ENCODE measurements at regions of chr7 and their contacts with region 1.

Region 1: GRCh38 chr7:95411036-95411435 is 14.9 kb upstream of the PON3 start:
- DNase-seq: no peak
- ATAC-seq: no peak
- H3K4me3 ChIP-seq: no peak overlapping the region
- H3K27ac ChIP-seq: no peak overlapping the region
- H3K4me1 ChIP-seq: no peaks in the 10 kb centered on the region
- H3K27me3 ChIP-seq: no peaks in the 10 kb centered on the region
- CTCF ChIP-seq: no peak
- EP300 ChIP-seq: no peak
- POLR2A ChIP-seq: no peak
- RAD21 ChIP-seq: no peak

Region 2: GRCh38 chr7:95324431-95324830 is 86.6 kb before region 1 on chr7 and contains the start of gene PON1:
- CTCF ChIA-PET with region 1: no interaction called
- POLR2A ChIA-PET with region 1: no interaction called
- RAD21 ChIA-PET with region 1: no interaction called
- SMC1A ChIA-PET with region 1: no interaction called
- in situ Hi-C with region 1: no loop called
- intact Hi-C with region 1: no loop called
- DNase-seq: no peak
- ATAC-seq: peak; percentile 65
- H3K4me3 ChIP-seq: peak within 1 kb of the TSS; percentile 32; the same call in 1 of the 2 replicates
- H3K27ac ChIP-seq: no peak within 1 kb of the TSS
- H3K4me1 ChIP-seq: no peaks in the 10 kb centered on the region
- H3K27me3 ChIP-seq: no peaks in the 10 kb centered on the region
- CTCF ChIP-seq: no peak
- EP300 ChIP-seq: no peak
- POLR2A ChIP-seq: no peak
- RAD21 ChIP-seq: no peak
- polyA plus RNA-seq, gene PON1: 0.10 to 0.22 TPM

Region 3: GRCh38 chr7:95396136-95397032 is 14.7 kb before region 1 on chr7 and contains the start of gene PON3:
- CTCF ChIA-PET with region 1: no interaction called
- POLR2A ChIA-PET with region 1: no interaction called
- RAD21 ChIA-PET with region 1: interaction called, 3 read pairs
- SMC1A ChIA-PET with region 1: interaction called, 12 read pairs
- in situ Hi-C with region 1: no loop called
- intact Hi-C with region 1: no loop called
- DNase-seq: no peak
- ATAC-seq: peak; percentile 76
- H3K4me3 ChIP-seq: no peak within 1 kb of the TSS
- H3K27ac ChIP-seq: no peak within 1 kb of the TSS
- H3K4me1 ChIP-seq: no peaks in the 10 kb centered on the region
- H3K27me3 ChIP-seq: peaks cover 0 to 6% of the 10 kb centered on the region in 2 experiments; a peak in 2 of 4 replicates
- CTCF ChIP-seq: peak; percentile 24 to 48 (median 26); a peak in 4 of 6 replicates
- EP300 ChIP-seq: no peak
- POLR2A ChIP-seq: no peak
- RAD21 ChIP-seq: peak; percentile 32; the same call in 1 of the 2 replicates
- polyA plus RNA-seq, gene PON3: 1.4 to 2.0 TPM

Measured in GM12878 (cell line).